Activated CD4-positive, alpha-beta memory T cell treated with anti-CD3 and anti-CD28 coated beads for 36 hours (primary cell): ENCODE measurements at regions of chr14 and their contacts with region 1.

Region 1: DNA sequence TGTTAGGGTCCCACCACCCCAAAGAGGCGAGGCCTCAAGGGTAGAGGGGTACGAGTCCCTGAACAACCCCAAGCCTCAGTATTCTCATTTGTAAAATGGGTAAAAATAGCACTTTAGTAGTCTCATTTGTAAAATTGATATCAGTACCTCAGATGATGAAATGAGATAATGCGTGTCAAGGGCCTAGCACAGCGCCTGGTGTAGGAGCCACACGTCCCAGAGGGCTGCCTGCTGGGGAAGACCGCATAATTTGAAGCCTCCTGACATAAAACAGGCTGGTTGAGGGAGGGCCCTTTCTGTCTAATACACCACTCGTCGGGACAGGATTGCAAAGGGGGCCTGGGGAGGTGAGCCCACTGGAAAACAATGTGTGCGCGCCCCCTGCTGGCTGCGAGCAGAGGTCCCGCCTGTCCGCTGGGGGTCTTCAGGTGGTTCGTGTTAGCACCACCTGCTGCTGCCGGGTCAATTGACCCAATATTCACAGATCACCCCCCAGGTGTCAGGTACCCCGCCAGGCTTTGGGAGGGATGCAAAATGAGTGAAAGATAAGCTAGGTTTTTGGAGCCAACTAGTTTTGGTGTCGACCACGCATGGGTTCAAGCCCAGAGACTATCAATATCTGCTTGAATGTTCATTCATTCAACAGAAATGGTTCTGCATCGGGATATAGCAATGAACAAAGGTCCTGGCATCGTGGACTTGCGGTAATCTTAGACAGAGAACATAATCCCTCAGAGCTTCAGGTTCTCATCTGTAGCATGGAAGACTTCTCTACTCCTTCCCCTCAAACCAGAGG is 24.7 kb upstream of the IRF2BPL start:
- DNase-seq: peak; percentile 85
- H3K4me3 Mint-ChIP-seq: no peak overlapping the region
- H3K27ac Mint-ChIP-seq: peak overlapping the region; percentile 23
- H3K4me1 Mint-ChIP-seq: peaks cover 23% of the 10 kb centered on the region
- H3K27me3 Mint-ChIP-seq: no peaks in the 10 kb centered on the region

Region 2: GRCh38 chr14:76812211-76813044 is 240.8 kb before region 1 on chr14 and contains the start of gene ANGEL1:
- CTCF ChIA-PET with region 1: no interaction called
- POLR2A ChIA-PET with region 1: no interaction called
- intact Hi-C with region 1: no loop called
- DNase-seq: peak; percentile 98
- H3K4me3 Mint-ChIP-seq: peak within 1 kb of the TSS; percentile 92
- H3K27ac Mint-ChIP-seq: peak within 1 kb of the TSS; percentile 80
- H3K4me1 Mint-ChIP-seq: peaks cover 19% of the 10 kb centered on the region
- H3K27me3 Mint-ChIP-seq: no peaks in the 10 kb centered on the region
- total RNA-seq, gene ANGEL1: 14.6 to 15.9 TPM

Region 3: GRCh38 chr14:76904740-76905438 is 148.4 kb before region 1 on chr14:
- CTCF ChIA-PET with region 1: interaction called, 130 read pairs
- POLR2A ChIA-PET with region 1: no interaction called
- intact Hi-C with region 1: no loop called
- DNase-seq: peak; percentile 93
- H3K4me3 Mint-ChIP-seq: peak overlapping the region; percentile 14
- H3K27ac Mint-ChIP-seq: peak overlapping the region; percentile 70
- H3K4me1 Mint-ChIP-seq: peaks cover 28% of the 10 kb centered on the region
- H3K27me3 Mint-ChIP-seq: no peaks in the 10 kb centered on the region

Region 4: DNA sequence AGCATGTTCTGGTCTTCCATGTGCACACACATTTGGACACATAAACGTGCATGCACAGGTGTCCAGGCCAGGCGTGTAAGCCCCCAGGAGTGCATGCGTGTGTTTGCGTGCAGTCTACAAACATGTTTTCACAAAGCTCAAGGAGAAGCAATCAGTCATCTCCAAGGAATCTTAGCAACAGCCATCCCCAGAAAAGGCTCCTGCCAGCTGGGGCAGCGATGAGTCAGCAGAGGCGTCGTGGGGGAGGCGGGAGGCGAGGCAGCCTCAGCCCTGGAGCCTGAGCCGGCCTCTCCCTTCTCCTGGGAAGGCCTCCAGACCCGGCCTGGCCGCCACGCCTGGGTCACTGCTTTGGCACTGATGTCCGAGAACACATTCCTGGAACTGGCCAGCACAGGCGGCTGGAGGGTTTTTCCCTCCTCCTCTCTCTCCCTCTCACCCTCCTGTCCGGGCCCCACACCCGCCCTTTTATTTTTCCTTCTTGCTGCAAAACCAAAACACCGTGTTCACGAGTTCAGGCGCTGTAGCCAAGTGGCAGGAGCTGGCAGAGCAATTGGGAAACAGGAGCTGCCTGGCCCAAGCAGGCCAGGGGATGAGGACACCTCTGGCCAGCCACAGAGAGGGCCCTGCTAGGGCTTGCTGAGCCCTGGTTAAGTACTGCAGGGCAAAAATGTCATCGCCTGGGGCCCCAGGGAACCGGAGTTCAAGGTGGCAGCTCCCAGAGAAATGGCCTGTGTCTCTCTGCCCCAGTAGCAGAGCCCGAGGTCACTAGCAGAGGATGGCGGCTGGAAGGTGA is 134.3 kb before region 1 on chr14:
- CTCF ChIA-PET with region 1: interaction called, 130 read pairs
- POLR2A ChIA-PET with region 1: no interaction called
- intact Hi-C with region 1: no loop called
- DNase-seq: peak; percentile 31
- H3K4me3 Mint-ChIP-seq: no peak overlapping the region
- H3K27ac Mint-ChIP-seq: no peak overlapping the region
- H3K4me1 Mint-ChIP-seq: peaks cover 33% of the 10 kb centered on the region
- H3K27me3 Mint-ChIP-seq: no peaks in the 10 kb centered on the region

Region 5: GRCh38 chr14:76947078-76947837 is 106.0 kb before region 1 on chr14:
- CTCF ChIA-PET with region 1: interaction called, 23 read pairs
- POLR2A ChIA-PET with region 1: no interaction called
- intact Hi-C with region 1: loop called (anchors 1 kb)
- DNase-seq: peak; percentile 91
- H3K4me3 Mint-ChIP-seq: peak overlapping the region; percentile 29
- H3K27ac Mint-ChIP-seq: peak overlapping the region; percentile 23
- H3K4me1 Mint-ChIP-seq: peaks cover 43% of the 10 kb centered on the region
- H3K27me3 Mint-ChIP-seq: no peaks in the 10 kb centered on the region

Region 6: GRCh38 chr14:77023001-77023996 is 29.9 kb before region 1 on chr14:
- CTCF ChIA-PET with region 1: interaction called, 30 read pairs
- POLR2A ChIA-PET with region 1: no interaction called
- intact Hi-C with region 1: loop called (anchors 2 kb)
- DNase-seq: peak; percentile 79
- H3K4me3 Mint-ChIP-seq: peak overlapping the region; percentile 58
- H3K27ac Mint-ChIP-seq: peak overlapping the region; percentile 87
- H3K4me1 Mint-ChIP-seq: peaks cover 44% of the 10 kb centered on the region
- H3K27me3 Mint-ChIP-seq: no peaks in the 10 kb centered on the region

Region 7: DNA sequence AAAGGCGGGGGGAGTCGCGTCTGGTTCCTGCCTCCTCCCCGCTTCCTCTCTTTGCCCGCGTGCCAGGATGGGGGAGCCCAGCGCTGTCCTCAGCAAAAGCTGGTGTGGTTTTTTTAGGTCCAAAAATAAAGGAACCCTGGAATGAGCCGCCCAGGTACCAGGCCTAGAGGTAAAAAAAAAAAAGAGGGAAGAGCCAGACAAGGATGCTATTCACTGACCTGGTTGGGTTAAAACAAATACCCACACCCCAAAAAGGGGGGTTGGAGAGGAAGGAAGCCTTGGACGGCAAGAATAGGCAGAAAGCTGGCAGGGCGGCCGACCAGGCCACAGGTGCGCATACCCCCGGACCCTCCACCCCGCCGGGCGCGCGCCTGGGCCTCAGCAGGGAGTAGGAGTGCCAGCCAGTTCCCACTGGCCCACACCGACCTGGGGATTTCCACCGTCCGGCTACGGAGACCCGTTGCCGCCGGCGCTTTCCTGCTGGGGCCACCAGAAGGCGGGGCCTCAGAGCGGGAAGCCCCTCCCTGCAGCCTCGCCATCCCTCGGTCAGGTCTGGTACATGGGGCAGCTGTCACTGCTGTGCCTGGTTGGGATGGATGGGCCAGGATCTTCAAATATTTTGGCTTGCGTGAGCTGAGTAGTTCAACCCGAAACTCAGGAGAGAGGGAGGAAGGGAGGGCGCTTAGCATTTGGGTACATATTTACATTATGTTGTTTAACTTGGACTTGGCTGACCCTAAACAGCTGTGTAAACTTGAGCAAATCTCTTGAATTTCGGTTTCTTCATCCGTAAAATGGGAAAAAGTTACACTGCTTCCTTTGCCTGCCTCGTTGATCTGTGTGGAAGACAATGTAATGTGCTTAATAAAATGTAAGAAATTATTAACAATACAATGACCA is 19.4 kb before region 1 on chr14:
- CTCF ChIA-PET with region 1: interaction called, 23 read pairs
- POLR2A ChIA-PET with region 1: interaction called, 3 read pairs
- intact Hi-C with region 1: loop called (anchors 2 kb)
- DNase-seq: peak; percentile 95
- H3K4me3 Mint-ChIP-seq: peak overlapping the region; percentile 94
- H3K27ac Mint-ChIP-seq: peak overlapping the region; percentile 98
- H3K4me1 Mint-ChIP-seq: peaks cover 72% of the 10 kb centered on the region
- H3K27me3 Mint-ChIP-seq: no peaks in the 10 kb centered on the region

Region 8: GRCh38 chr14:77630111-77630510 is 576.9 kb after region 1 on chr14:
- CTCF ChIA-PET with region 1: no interaction called
- POLR2A ChIA-PET with region 1: no interaction called
- intact Hi-C with region 1: no loop called
- DNase-seq: no peak
- H3K4me3 Mint-ChIP-seq: no peak overlapping the region
- H3K27ac Mint-ChIP-seq: no peak overlapping the region
- H3K4me1 Mint-ChIP-seq: no peaks in the 10 kb centered on the region
- H3K27me3 Mint-ChIP-seq: peaks cover 2% of the 10 kb centered on the region